Activated CD4-positive, alpha-beta T cell treated with anti-CD3 and anti-CD28 coated beads for 36 hours (primary cell): ENCODE measurements at regions of chr9 and their contacts with region 1.

Region 1: GRCh38 chr9:98255578-98256296 is at the start of gene TBC1D2:
- DNase-seq: peak; percentile 99
- ATAC-seq: peak; percentile 87
- H3K4me3 Mint-ChIP-seq: peak within 1 kb of the TSS; percentile 94
- H3K27ac Mint-ChIP-seq: peak within 1 kb of the TSS; percentile 98
- H3K4me1 Mint-ChIP-seq: peaks cover 17% of the 10 kb centered on the region
- H3K27me3 Mint-ChIP-seq: no peaks in the 10 kb centered on the region
- total RNA-seq, gene TBC1D2: 2.8 to 3.2 TPM

Region 2: DNA sequence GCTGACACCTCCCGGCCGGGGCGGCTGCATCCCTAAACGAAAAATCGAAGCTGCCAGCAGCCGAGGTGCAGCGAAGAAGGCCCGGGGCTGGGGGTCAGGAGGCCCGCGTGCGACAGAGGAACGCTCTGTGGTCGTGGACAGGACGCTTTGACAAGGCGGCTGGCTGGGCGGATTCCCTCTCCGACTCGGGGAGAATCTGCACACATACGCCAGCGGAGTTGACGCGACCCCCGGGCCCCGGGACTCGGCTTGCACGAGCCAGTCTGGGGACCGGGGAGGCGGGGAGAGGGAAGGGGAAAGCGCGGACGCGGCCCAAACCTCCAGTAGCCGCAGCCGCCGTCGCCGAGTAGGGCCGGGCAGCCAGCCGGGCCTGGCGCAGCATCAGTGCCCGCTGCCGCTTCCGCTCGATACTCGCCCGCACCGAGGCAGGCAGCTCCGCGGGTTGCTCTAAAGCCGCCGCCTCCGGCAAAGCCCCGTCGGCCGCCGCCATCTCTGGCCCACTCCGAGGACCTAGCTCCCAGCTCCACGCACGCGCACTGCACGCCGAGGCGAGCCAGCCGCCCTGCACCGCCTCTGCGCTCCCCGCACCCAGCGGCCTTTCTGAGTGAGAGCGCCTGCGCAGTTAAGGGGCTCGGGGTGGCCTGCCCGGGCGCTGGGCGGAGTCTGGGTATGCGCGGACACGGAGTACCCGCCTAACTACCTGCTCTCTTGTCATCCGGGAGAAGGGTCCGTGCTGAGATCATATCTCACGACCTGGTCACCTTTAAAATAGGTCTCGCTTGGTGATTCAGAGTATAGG is 558.7 kb before region 1 on chr9 and contains the start of gene XPA:
- CTCF ChIA-PET with region 1: no interaction called
- POLR2A ChIA-PET with region 1: no interaction called
- intact Hi-C with region 1: loop called (anchors 5 to 10 kb)
- DNase-seq: peak; percentile 98
- ATAC-seq: peak; percentile 95
- H3K4me3 Mint-ChIP-seq: peak within 1 kb of the TSS; percentile 81
- H3K27ac Mint-ChIP-seq: peak within 1 kb of the TSS; percentile 92
- H3K4me1 Mint-ChIP-seq: peaks cover 45% of the 10 kb centered on the region
- H3K27me3 Mint-ChIP-seq: peaks cover 2% of the 10 kb centered on the region
- total RNA-seq, gene XPA: 8.7 to 11.1 TPM

Region 3: DNA sequence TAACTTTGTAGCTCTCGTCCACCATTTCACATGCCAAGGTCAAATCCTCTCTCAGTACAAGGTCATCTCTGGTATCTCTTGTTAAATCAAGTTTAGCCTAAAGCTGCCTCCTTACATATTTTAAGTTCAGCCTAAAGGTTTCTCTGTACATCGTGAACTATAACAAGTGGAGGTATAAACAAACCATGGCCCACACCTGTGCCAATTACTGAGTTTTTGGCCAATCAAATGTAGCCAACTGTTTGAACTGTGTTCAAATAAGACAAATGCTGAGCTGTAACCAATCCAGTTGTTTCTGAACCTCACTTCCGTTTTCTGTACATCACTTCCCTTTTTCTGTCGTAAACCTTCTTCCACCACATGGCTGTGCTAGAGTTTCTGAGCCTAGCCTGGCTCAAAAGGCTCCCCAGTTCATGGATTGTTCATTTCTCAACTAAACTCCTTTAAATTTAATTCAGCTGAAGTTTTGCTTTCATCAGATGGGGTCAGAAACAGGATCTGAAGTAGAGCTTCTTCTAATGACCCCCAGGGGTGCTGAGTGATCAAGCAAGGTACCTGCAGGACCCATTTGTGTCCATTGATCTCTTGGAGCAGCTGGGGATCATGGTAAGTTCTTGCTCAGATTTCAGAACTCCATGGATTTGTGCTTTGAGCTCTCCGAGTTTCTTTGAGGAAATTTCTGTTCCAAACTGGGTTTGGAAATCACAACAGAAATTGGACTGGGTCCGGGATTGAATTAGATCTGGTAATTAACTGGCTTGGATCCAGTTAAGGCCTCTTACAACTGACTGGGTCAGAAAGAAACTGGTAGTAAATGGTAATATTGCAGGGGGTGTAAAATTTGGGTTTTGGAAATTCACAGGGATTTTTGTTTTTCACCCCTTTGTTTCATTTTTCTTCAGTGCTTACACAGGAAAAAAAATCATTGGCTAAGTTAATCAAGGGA is 210.2 kb before region 1 on chr9:
- CTCF ChIA-PET with region 1: interaction called, 10 read pairs
- POLR2A ChIA-PET with region 1: interaction called, 7 read pairs
- intact Hi-C with region 1: loop called in 1 of 2 experiments (anchors 1 kb)
- DNase-seq: peak; percentile 52
- ATAC-seq: peak; percentile 96
- H3K4me3 Mint-ChIP-seq: peak overlapping the region; percentile 84
- H3K27ac Mint-ChIP-seq: peak overlapping the region; percentile 95
- H3K4me1 Mint-ChIP-seq: peaks cover 31% of the 10 kb centered on the region
- H3K27me3 Mint-ChIP-seq: no peaks in the 10 kb centered on the region

Region 4: DNA sequence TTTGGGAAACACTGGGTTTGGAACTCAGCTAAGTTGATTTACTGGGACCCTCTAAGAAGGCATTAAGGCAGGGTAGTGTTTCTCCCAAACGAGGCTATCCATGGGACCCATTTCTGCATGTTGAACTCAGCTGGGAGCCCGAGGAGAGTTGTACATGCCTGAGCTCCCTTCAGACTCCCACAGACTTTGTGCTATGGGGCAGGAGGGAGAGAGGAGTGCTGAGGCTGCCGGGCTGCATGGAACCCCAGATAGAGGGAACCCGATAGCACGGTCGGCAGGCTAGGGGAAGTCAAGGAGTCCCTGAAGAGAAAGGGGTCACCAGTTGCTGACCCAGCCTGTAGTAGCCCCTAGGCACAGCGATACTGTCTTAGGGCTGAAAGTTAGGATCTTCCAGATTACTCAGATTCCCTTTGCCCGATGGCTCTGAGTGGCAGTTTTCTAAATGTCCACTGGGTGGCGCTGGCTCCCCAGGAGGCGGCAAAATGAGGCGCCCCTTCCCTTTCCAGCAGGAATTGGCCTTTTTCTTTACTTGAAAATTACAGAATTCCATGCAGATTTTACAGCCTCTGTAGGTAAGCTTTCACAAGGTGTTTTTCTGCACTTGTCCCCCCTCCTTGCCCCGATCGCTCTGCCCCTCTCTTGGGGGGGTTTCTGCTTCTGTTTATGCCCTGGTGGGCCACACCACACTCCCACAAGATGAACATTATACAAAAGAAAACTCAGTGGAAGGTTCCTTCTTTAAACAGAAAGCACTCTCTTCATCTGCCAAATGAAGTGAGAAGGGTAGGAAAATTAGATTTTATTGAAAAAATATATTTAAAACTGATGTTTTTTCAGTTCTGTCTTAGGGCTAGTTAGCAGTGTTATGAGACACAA is 181.4 kb before region 1 on chr9:
- CTCF ChIA-PET with region 1: interaction called, 16 read pairs
- POLR2A ChIA-PET with region 1: interaction called, 3 read pairs
- intact Hi-C with region 1: loop called in 1 of 2 experiments (anchors 1 kb)
- DNase-seq: peak; percentile 81
- ATAC-seq: no peak
- H3K4me3 Mint-ChIP-seq: no peak overlapping the region
- H3K27ac Mint-ChIP-seq: peak overlapping the region; percentile 90
- H3K4me1 Mint-ChIP-seq: peaks cover 34% of the 10 kb centered on the region
- H3K27me3 Mint-ChIP-seq: no peaks in the 10 kb centered on the region

Region 5: DNA sequence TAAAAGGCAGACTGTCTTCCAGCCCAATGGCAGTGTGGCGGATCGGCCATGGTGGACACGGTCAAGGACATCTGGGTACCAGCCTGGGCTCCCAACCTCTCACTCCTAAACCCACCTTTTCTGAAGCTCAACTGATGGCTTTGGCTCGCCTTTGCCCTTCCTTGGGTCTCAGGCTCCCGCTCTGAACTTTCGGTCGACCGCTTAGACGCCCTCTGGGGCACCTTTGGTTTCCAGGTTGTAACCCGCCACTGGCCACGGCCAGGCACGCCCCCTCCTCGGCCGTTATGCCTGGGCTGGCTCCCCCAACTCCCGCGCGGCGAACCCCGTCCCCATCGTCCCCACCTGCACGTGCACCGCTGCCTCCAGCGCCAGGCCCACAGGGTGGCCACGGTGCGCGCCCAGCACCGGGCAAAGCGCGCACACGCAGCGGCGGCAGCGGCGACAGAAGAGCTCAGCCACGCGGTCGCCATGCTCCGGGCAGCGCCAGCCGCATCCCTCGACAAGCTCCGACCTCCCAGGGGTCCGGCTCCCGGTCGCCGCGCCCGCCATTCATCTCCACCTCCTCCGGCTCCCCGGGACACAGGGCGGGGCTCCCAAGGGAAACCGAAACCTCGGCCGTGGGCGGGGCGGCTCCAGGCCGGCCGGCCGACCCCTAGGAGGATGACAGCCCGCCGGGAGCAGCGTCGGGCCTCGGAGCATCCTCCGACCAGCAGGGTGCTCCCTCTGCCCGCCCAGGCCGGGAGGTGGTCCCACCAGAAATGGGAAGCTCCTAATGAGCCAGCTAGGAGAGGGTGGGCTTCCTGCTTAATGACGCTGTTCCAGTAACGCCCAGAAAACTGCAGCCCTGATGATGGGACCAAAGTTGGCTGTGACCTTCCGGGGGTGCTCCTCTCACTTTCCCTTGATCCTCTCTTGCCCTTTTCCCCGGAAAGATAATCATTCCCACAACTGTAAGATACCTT is 136.8 kb before region 1 on chr9 and contains the start of gene TRIM14:
- CTCF ChIA-PET with region 1: interaction called, 11 read pairs
- POLR2A ChIA-PET with region 1: interaction called, 4 read pairs
- intact Hi-C with region 1: loop called (anchors 1 to 5 kb)
- DNase-seq: peak; percentile 79
- ATAC-seq: peak; percentile 49
- H3K4me3 Mint-ChIP-seq: peak within 1 kb of the TSS; percentile 75
- H3K27ac Mint-ChIP-seq: peak within 1 kb of the TSS; percentile 91
- H3K4me1 Mint-ChIP-seq: peaks cover 47% of the 10 kb centered on the region
- H3K27me3 Mint-ChIP-seq: no peaks in the 10 kb centered on the region
- total RNA-seq, gene TRIM14: 54.6 to 59.6 TPM

Region 6: GRCh38 chr9:98796364-98797101 is 540.8 kb after region 1 on chr9 and contains the start of gene ANKS6:
- CTCF ChIA-PET with region 1: no interaction called
- POLR2A ChIA-PET with region 1: no interaction called
- intact Hi-C with region 1: loop called in 1 of 2 experiments (anchors 1 kb)
- DNase-seq: peak; percentile 90
- ATAC-seq: peak; percentile 90
- H3K4me3 Mint-ChIP-seq: peak within 1 kb of the TSS; percentile 77
- H3K27ac Mint-ChIP-seq: peak within 1 kb of the TSS; percentile 81
- H3K4me1 Mint-ChIP-seq: peaks cover 25% of the 10 kb centered on the region
- H3K27me3 Mint-ChIP-seq: no peaks in the 10 kb centered on the region
- total RNA-seq, gene ANKS6: 15.8 to 17.4 TPM

Region 7: GRCh38 chr9:99253772-99254431 is 998.2 kb after region 1 on chr9:
- CTCF ChIA-PET with region 1: no interaction called
- POLR2A ChIA-PET with region 1: no interaction called
- intact Hi-C with region 1: loop called in 1 of 2 experiments (anchors 5 kb)
- DNase-seq: peak; percentile 95
- ATAC-seq: peak; percentile 83
- H3K4me3 Mint-ChIP-seq: peak overlapping the region; percentile 58
- H3K27ac Mint-ChIP-seq: peak overlapping the region; percentile 95
- H3K4me1 Mint-ChIP-seq: peaks cover 60% of the 10 kb centered on the region
- H3K27me3 Mint-ChIP-seq: peaks cover 5% of the 10 kb centered on the region